Right lobe of liver (tissue), 6 donors: ENCODE measurements at regions of chr18 and their contacts with region 1.

Region 1: GRCh38 chr18:44668270-44668975 is 12.3 kb upstream of the SETBP1 start:
- DNase-seq: no peak
- ATAC-seq: no peak
- H3K4me3 ChIP-seq: no peak overlapping the region
- H3K27ac ChIP-seq: no peak overlapping the region
- H3K4me1 ChIP-seq: no peaks in the 10 kb centered on the region
- H3K27me3 ChIP-seq: no peaks in the 10 kb centered on the region
- CTCF ChIP-seq: no peak
- POLR2A ChIP-seq: no peak

Region 2: GRCh38 chr18:45202061-45202460 is 533.6 kb after region 1 on chr18:
- intact Hi-C with region 1: loop called in 1 of 2 experiments (anchors 10 kb)
- DNase-seq: no peak
- ATAC-seq: no peak
- H3K4me3 ChIP-seq: no peak overlapping the region
- H3K27ac ChIP-seq: no peak overlapping the region
- H3K4me1 ChIP-seq: no peaks in the 10 kb centered on the region
- H3K27me3 ChIP-seq: no peaks in the 10 kb centered on the region
- CTCF ChIP-seq: no peak
- POLR2A ChIP-seq: no peak